PC-3 (cell line): ENCODE measurements at regions of chr3 and their contacts with region 1.

Region 1: DNA sequence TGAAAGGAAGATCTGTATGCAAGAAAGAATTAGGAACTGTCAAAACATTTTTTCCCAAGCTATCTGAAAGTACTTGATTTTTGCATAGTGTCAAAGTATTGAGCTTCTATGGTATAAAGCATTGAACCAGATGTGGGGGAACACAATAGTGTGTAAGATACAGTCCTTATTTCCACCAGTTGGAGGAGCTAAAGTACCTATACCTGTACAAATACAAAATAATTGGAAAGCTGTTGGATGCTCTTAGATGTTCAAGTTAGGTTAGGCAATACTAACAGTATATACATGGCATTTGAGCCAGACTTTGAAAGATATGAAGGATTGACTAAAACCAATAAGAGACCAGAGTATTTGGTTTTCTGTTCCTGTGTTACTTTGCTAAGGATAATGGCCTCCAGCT is 148.3 kb downstream of the B3GALNT1 start:
- DNase-seq: peak; percentile 74
- ATAC-seq: peak; percentile 92
- H3K4me3 ChIP-seq: no peak overlapping the region
- H3K27ac ChIP-seq: no peak overlapping the region
- H3K4me1 ChIP-seq: no peaks in the 10 kb centered on the region
- H3K27me3 ChIP-seq: no peaks in the 10 kb centered on the region
- CTCF ChIP-seq: peak; percentile 86

Region 2: DNA sequence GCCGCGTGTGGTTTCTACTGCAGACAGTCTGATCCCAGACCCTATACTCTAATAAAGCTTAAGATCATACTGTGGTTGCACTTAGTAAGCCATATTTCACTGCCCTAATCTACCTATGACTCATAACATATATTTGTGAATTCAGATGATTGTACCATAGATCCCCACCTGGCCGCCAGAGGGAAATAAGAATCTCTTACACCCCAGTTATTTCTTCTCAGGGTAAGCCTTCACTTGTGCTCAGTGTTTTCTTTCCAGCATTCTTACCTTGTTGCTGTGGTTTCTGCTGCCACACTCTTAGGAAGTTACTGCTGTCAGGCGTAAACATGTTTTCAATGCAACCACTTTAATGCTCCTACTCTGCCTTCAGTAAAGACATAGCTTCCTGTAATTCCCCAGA is 42.5 kb after region 1 on chr3:
- CTCF ChIA-PET with region 1: no interaction called
- POLR2A ChIA-PET with region 1: no interaction called
- intact Hi-C with region 1: no loop called
- DNase-seq: peak; percentile 75
- ATAC-seq: peak; percentile 97
- H3K4me3 ChIP-seq: no peak overlapping the region
- H3K27ac ChIP-seq: no peak overlapping the region
- H3K4me1 ChIP-seq: peaks cover 10% of the 10 kb centered on the region
- H3K27me3 ChIP-seq: no peaks in the 10 kb centered on the region
- CTCF ChIP-seq: peak; percentile 61

Region 3: GRCh38 chr3:161096771-161097355 is 140.1 kb after region 1 on chr3:
- CTCF ChIA-PET with region 1: no interaction called
- POLR2A ChIA-PET with region 1: no interaction called
- intact Hi-C with region 1: loop called (anchors 2 kb)
- DNase-seq: peak; percentile 72
- ATAC-seq: peak; percentile 77
- H3K4me3 ChIP-seq: no peak overlapping the region
- H3K27ac ChIP-seq: no peak overlapping the region
- H3K4me1 ChIP-seq: 0 out of 2 replicates have a peak, but pooled peaks cover 11% of the 10 kb centered on the region
- H3K27me3 ChIP-seq: no peaks in the 10 kb centered on the region
- CTCF ChIP-seq: peak; percentile 93